Activated CD4-positive, alpha-beta memory T cell treated with anti-CD3 and anti-CD28 coated beads for 36 hours (primary cell): ENCODE measurements at regions of chr11 and their contacts with region 1.

Region 1: GRCh38 chr11:111586388-111586831 is 15.8 kb upstream of the SIK2 start:
- DNase-seq: peak; percentile 35
- H3K4me3 Mint-ChIP-seq: no peak overlapping the region
- H3K27ac Mint-ChIP-seq: no peak overlapping the region
- H3K4me1 Mint-ChIP-seq: no peaks in the 10 kb centered on the region
- H3K27me3 Mint-ChIP-seq: no peaks in the 10 kb centered on the region

Region 2: DNA sequence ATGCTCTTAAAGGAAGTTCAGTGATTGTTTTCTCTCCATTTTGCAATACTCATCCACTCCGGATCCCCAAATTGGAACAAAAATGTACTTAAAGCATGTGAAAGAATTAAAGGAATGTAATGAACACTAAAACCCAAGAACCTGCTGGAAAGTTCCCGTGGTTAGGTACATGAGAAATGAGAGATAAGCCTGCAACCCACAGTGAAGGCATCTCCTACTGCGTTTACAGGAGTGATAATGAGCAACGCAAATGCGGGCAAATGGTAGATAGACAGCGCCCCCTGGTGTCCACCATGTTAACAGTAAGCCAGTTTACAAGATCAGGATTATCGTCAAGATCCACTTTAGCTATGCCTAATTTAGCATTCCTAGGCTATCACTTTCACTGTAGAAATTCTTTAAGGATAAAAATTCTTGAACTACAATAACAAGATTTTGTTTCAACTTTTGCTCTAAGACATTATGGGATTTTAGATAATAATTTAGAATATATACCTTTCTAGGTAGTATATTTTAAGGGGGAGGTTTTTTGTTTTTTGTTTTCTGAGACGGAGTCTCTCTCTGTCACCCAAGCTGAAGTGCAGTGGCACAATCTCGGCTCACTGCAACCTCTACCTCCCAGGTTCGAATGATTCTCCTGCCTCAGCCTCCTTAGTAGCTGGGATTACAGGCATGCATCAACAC is 255.1 kb after region 1 on chr11:
- CTCF ChIA-PET with region 1: interaction called, 22 read pairs
- POLR2A ChIA-PET with region 1: no interaction called
- intact Hi-C with region 1: loop called (anchors 1 kb)
- DNase-seq: peak; percentile 91
- H3K4me3 Mint-ChIP-seq: no peak overlapping the region
- H3K27ac Mint-ChIP-seq: no peak overlapping the region
- H3K4me1 Mint-ChIP-seq: peaks cover 11% of the 10 kb centered on the region
- H3K27me3 Mint-ChIP-seq: no peaks in the 10 kb centered on the region